BJ (cell line): ENCODE measurements at regions of chr6 and their contacts with region 1.

Region 1: DNA sequence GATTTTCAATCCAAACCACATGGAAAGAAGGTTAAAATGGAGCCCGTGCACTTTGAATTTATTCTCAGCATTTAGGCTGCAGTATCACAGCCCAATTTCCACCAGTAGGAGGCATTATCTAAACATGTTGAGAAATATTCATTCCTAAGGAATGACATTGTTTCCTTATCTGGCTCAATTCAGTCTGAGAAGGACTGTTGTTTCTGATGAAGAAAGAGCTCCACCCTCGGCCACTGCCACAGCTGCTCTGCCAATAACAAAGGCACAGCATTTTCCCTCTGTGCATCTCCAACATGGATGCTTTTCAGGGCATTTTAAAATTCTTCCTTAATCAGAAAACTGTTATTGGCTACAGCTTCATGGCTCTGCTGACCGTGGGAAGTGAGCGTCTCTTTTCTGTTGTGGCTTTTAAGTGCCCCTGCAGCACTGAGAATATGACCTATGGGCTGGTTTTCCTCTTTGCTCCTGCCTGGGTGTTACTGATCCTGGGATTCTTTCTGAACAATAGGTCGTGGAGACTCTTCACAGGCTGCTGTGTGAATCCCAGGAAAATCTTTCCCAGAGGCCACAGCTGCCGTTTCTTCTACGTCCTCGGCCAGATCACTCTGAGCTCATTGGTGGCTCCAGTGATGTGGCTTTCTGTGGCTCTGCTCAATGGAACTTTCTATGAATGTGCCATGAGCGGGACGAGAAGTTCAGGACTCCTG is at the start of gene CALHM5:
- DNase-seq: peak; percentile 58
- H3K4me3 ChIP-seq: peak within 1 kb of the TSS; percentile 46
- H3K27me3 ChIP-seq: no peaks in the 10 kb centered on the region
- CTCF ChIP-seq: peak; percentile 68
- polyA plus RNA-seq, gene CALHM5: 4.4 and 6.6 TPM in 2 replicates

Region 2: DNA sequence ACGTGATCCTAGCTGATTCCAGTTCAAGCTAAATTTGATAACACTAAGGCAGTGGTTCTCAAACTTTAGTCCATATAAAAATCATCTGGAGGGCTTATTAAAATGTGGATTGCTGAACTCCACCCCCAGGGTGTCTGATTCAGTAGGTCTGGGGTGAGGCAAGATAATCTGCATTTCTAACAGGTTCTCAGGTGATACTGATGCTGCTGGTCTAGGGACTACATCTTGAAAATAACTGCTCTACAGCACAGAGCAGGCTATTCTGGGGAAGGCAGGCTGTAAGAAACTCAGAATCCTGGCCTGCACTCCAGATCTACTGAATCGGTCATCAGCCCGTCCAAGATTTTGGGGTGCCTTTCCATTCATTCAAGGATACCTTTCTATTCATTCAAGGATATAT is 11.3 kb after region 1 on chr6:
- CTCF ChIA-PET with region 1: interaction called, 18 read pairs
- POLR2A ChIA-PET with region 1: no interaction called
- DNase-seq: no peak
- H3K4me3 ChIP-seq: no peak overlapping the region
- H3K27me3 ChIP-seq: no peaks in the 10 kb centered on the region
- CTCF ChIP-seq: no peak

Region 3: GRCh38 chr6:116531675-116532570 is 20.4 kb after region 1 on chr6:
- CTCF ChIA-PET with region 1: interaction called, 16 read pairs
- POLR2A ChIA-PET with region 1: no interaction called
- DNase-seq: no peak
- H3K4me3 ChIP-seq: no peak overlapping the region
- H3K27me3 ChIP-seq: no peaks in the 10 kb centered on the region
- CTCF ChIP-seq: peak; percentile 76